AG04449 (cell line): ENCODE measurements at regions of chr4 and their contacts with region 1.

Region 1: GRCh38 chr4:20428436-20429160 is 176.9 kb downstream of the SLIT2 start:
- DNase-seq: no peak
- H3K4me3 ChIP-seq: no peak overlapping the region
- CTCF ChIP-seq: peak; percentile 9

Region 2: DNA sequence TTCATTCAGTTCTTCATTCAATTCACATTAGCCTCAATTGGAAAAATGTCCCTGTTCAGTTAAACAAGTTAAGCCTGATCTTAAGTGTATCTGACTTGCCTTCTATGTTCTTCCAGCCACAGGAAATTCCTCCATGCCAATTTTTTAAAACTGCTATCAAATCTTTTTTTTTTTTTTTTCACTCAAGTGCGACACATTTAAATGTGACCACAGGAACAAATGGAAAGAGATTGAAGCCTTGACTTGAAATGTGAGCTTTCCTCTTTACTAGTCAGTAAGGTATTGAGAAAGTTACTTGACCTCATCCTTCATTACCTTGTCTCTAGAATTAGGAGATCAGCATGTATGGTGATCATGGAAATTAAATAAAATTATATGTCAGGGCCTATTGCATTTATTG is 11.8 kb before region 1 on chr4:
- CTCF ChIA-PET with region 1: interaction called, 11 read pairs
- POLR2A ChIA-PET with region 1: no interaction called
- DNase-seq: no peak
- H3K4me3 ChIP-seq: no peak overlapping the region
- CTCF ChIP-seq: no peak

Region 3: DNA sequence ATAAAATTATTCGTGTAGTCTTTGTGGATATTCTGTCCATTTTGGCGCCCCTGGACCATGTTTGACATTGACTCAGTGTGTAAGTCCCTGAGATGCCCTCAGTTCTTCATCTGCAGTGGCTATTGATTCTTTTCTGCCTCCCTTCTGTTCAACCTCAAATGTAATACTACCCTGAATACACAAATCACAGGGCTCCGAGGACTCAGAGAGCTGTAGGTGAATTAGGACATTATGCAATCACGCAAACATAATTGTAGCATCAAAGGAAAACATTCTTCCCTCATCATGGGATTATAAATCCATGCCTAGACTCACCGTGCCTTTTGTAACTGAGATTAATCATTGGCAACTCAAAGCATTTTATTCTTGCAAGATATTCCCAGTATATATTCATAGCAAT is 110.3 kb after region 1 on chr4:
- CTCF ChIA-PET with region 1: interaction called, 22 read pairs
- POLR2A ChIA-PET with region 1: no interaction called
- DNase-seq: no peak
- H3K4me3 ChIP-seq: no peak overlapping the region
- CTCF ChIP-seq: no peak

Region 4: DNA sequence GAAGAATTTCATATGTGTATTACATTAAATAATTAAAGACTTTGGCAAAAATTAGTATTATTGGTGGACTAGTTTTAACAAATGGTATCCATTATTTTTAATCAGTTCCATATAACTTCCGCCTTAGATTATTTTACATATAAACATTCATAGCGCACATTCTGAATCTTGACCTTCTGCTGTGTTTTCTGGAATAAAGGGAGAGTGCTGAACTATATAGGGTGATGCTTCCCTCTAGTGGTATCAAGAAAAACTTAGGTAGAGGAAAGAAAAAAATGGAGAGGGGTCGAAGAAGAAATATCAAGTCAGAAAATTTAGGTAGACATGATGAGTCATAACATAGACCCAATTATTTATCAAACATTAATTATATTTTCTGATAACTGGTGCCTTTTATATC is 116.0 kb after region 1 on chr4:
- CTCF ChIA-PET with region 1: interaction called, 22 read pairs
- POLR2A ChIA-PET with region 1: no interaction called
- DNase-seq: no peak
- H3K4me3 ChIP-seq: no peak overlapping the region
- CTCF ChIP-seq: peak; percentile 37

Region 5: GRCh38 chr4:20684852-20685763 is 256.5 kb after region 1 on chr4:
- CTCF ChIA-PET with region 1: interaction called, 16 read pairs
- POLR2A ChIA-PET with region 1: no interaction called
- DNase-seq: no peak
- H3K4me3 ChIP-seq: no peak overlapping the region
- CTCF ChIP-seq: peak; percentile 22